Activated CD4-positive, alpha-beta T cell treated with anti-CD3 and anti-CD28 coated beads, Interleukin-2, amount 10 ng/mL, durations not matched to agents 24 days and 14 days (primary cell): ENCODE measurements at regions of chrX and their contacts with region 1.

Region 1: GRCh38 chrX:37825209-37825842 is 22.0 kb downstream of the DYNLT3 start:
- DNase-seq: peak; percentile 84
- H3K4me3 Mint-ChIP-seq: no peak overlapping the region
- H3K27ac Mint-ChIP-seq: no peak overlapping the region
- H3K4me1 Mint-ChIP-seq: peaks cover 15% of the 10 kb centered on the region
- H3K27me3 Mint-ChIP-seq: no peaks in the 10 kb centered on the region

Region 2: GRCh38 chrX:37578045-37578444 is 247.3 kb before region 1 on chrX:
- intact Hi-C with region 1: loop called (anchors 10 kb)
- DNase-seq: no peak
- H3K4me3 Mint-ChIP-seq: no peak overlapping the region
- H3K27ac Mint-ChIP-seq: no peak overlapping the region
- H3K4me1 Mint-ChIP-seq: peaks cover 5% of the 10 kb centered on the region
- H3K27me3 Mint-ChIP-seq: peaks cover 3% of the 10 kb centered on the region